ENCODE measurements at regions of chr10 and their contacts with region 1.

Region 1: DNA sequence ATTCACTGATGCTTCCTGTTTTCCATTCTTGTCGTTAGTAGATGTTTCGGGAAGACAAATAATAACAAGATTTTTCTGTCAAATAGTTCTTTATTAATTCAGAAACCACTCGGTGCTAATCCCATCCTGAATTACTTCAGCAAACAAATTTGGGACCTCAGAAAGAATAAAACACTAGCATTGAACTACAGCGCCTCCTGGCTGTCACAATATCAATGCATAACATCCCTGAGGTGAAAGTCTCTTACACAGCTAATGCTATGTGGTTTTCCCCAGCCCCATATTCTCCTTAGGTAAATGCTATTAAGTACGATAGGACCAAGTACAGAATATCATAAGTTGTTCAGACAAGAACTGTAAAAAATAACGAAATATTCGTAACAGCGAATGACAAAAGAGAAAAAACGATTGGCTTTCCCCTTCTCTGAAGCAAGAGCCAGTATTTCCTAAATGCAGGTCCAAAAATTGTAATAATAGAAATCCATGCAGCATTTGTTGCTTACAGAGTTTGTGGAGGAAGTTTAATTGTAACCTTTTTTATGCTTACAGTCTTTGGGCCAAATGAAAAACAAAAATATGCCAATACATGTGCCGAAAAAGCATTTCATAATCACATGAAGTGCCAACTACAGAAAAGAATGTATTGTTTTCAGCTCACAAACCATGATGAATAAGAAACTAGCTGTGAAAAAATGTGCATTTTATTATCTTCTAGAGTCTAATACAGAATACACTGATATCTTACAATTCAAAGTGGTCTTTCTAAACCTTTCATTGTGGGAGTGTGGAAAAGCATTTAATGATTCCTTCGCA is 47.3 kb downstream of the MYPN start:
- DNase-seq: no peak
- ATAC-seq: peak; percentile 67 to 74
- H3K4me3 ChIP-seq: no peak overlapping the region
- H3K27ac ChIP-seq: no peak overlapping the region
- H3K4me1 ChIP-seq: no peaks in the 10 kb centered on the region
- H3K27me3 ChIP-seq: no peaks in the 10 kb centered on the region
- CTCF ChIP-seq: peak; percentile 86

Region 2: DNA sequence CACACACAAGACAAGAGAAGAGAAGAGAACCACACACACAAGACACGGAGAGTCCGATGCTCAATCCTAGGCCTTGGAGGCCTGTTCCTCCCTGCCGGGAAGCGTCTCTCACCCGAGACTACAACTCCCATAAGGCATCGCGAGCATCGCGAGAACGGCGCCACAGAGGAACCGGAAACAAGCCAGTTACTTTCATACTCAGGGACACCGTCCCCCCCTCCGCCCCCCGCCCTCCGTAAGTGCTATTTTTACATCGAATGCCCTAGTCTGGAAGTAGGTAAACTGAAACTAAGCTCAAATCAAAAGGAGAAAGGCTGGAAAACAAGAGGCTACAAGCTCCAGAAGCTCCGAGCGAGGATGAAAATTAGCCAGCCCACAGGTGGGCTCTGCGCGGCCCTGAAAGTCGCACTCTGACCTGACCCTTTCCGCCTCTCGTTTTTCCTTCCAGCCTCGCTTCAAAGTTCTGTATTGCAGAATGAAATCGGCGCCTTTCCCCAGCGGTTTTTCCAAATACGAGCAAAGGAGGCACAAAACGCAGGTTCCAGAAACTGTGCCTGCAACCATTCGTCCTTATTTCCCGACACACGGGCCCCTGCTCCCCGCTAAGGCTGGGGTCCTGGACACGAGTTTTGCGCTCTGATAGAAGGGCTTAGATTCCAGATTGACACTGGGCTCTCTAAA is 307.1 kb before region 1 on chr10:
- intact Hi-C with region 1: loop called (anchors 10 kb)
- DNase-seq: peak; percentile 97
- ATAC-seq: peak; percentile 99 to 100
- H3K4me3 ChIP-seq: peak overlapping the region; percentile 88
- H3K27ac ChIP-seq: peak overlapping the region; percentile 98
- H3K4me1 ChIP-seq: peaks cover 8% of the 10 kb centered on the region
- H3K27me3 ChIP-seq: no peaks in the 10 kb centered on the region
- CTCF ChIP-seq: no peak

Measured in lower lobe of right lung (tissue), 2 donors.